ENCODE measurements at regions of chr6 and their contacts with region 1.

Region 1: GRCh38 chr6:111210194-111210728 is 123.0 kb downstream of the SLC16A10 start:
- DNase-seq: no peak
- H3K4me3 Mint-ChIP-seq: no peak overlapping the region
- H3K27ac Mint-ChIP-seq: no peak overlapping the region
- H3K4me1 Mint-ChIP-seq: no peaks in the 10 kb centered on the region
- H3K27me3 Mint-ChIP-seq: no peaks in the 10 kb centered on the region

Region 2: GRCh38 chr6:111011360-111012142 is 198.7 kb before region 1 on chr6:
- CTCF ChIA-PET with region 1: interaction called, 12 read pairs
- DNase-seq: no peak
- H3K4me3 Mint-ChIP-seq: no peak overlapping the region
- H3K27ac Mint-ChIP-seq: no peak overlapping the region
- H3K4me1 Mint-ChIP-seq: peaks cover 4% of the 10 kb centered on the region
- H3K27me3 Mint-ChIP-seq: no peaks in the 10 kb centered on the region

Region 3: GRCh38 chr6:111057074-111057752 is 153.0 kb before region 1 on chr6:
- CTCF ChIA-PET with region 1: interaction called, 30 read pairs
- DNase-seq: no peak
- H3K4me3 Mint-ChIP-seq: no peak overlapping the region
- H3K27ac Mint-ChIP-seq: no peak overlapping the region
- H3K4me1 Mint-ChIP-seq: no peaks in the 10 kb centered on the region
- H3K27me3 Mint-ChIP-seq: peaks cover 10% of the 10 kb centered on the region

Region 4: DNA sequence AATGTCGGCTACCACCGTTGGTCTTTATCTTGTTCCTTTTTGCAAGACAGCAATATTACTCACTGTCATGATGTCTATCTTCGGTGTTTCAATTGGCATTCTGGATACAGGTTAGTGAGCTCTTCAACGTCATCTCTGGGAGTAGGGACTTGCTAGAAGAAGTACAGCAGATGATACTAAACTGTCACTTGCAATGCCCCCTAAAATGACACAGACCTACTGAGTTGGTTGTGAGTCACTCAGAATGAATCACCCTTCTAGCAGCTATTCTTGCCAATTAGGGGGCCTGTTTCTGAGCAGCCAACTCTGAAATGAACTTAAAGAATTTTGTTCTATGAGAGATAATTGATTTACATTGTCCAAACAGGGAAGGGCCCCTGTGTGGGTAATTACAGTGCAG is 53.6 kb after region 1 on chr6:
- CTCF ChIA-PET with region 1: no interaction called
- DNase-seq: no peak
- H3K4me3 Mint-ChIP-seq: no peak overlapping the region
- H3K27ac Mint-ChIP-seq: no peak overlapping the region
- H3K4me1 Mint-ChIP-seq: peaks cover 37% of the 10 kb centered on the region
- H3K27me3 Mint-ChIP-seq: peaks cover 3% of the 10 kb centered on the region